ENCODE measurements at regions of chr3 and their contacts with region 1.

Region 1: DNA sequence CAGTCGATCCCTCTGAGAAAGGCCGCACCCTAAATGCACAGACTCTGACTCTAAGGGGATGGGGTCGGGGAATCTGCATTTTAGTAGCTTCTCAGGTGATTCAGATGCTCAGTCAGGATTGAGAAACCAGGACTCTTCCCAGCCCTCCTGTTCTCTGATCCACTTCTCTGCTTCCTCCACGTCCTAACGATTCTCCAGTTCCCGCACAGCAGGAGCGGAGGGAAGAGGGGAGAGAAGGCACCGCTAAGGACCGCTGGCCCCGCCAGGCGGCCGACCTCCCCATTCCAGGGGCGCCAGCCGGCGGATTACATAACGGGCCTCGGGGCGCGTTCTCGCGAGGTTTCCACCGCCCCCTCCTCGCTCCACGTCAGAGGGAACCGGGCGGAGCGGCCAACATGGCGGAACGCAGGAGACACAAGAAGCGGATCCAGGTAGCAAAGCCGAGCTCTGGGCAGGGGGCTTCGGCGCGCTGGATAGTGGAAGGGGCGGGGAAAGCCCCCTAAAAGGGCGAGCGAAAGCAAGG is at the start of gene SEC62:
- DNase-seq: peak; percentile 95 to 98 (median 96)
- ATAC-seq: peak; percentile 98 to 99 (median 98)
- H3K4me3 ChIP-seq: peak within 1 kb of the TSS; percentile 65 to 99 (median 84)
- H3K27ac ChIP-seq: peak within 1 kb of the TSS; percentile 90 to 99 (median 94)
- H3K4me1 ChIP-seq: peaks cover 2 to 47% (median 35%) of the 10 kb centered on the region in 12 donors
- H3K27me3 ChIP-seq: no peaks in the 10 kb centered on the region
- CTCF ChIP-seq: peak; percentile 24 to 76 (median 47)
- POLR2A ChIP-seq: peak in 1 of 2 donors; percentile 83
- total RNA-seq, gene SEC62: 29.5 to 104 (median 75.2) TPM

Region 2: DNA sequence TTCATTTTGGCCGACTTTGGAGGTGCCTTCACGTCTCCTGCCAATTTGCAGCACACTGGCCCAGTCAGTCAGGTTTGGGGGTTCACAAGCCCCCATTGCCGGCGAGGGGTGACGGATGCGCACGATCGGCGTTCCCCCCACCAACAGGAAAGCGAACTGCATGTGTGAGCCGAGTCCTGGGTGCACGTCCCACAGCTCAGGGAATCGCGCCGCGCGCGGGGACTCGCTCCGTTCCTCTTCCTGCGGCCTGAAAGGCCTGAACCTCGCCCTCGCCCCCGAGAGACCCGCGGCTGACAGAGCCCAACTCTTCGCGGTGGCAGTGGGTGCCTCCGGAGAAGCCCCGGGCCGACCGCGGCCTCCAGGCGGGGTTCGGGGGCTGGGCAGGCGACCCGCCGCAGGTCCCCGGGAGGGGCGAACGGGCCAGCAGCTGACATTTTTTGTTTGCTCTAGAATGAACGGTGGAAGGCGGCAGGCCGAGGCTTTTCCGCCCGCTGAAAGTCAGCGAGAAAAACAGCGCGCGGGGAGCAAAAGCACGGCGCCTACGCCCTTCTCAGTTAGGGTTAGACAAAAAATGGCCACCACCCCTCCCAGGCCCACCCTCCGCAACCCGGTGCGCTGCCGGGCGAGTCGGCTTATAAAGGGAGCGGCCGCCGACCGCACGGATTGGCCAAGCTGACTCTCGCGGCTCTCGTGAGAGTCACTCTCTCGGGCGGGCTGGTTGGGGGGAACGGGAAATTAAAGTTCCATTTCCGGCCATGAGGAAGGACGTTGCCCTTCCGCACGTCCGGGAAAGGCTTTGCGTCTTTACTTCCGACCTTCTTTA is 201.8 kb before region 1 on chr3 and contains the start of gene TERC:
- intact Hi-C with region 1: loop called in 4 of 10 experiments (anchors 5 to 10 kb)
- DNase-seq: peak; percentile 94 to 97 (median 95)
- ATAC-seq: peak; percentile 95 to 96 (median 96)
- H3K4me3 ChIP-seq: peak within 1 kb of the TSS; percentile 72 to 95 (median 84)
- H3K27ac ChIP-seq: peak within 1 kb of the TSS; percentile 95 to 100 (median 98)
- H3K4me1 ChIP-seq: peaks cover 0 to 12% (median 0%) of the 10 kb centered on the region in 12 donors
- H3K27me3 ChIP-seq: no peaks in the 10 kb centered on the region
- CTCF ChIP-seq: peak in 1 of 12 donors; percentile 5
- POLR2A ChIP-seq: peak; percentile 96 to 98
- total RNA-seq, gene TERC: 1.0 to 60.8 (median 3.1) TPM in 7 of 9 donors, not detected in the others

Region 3: GRCh38 chr3:169772897-169773828 is 193.3 kb before region 1 on chr3 and contains the start of gene MYNN:
- intact Hi-C with region 1: loop called in 6 of 10 experiments (anchors 5 to 10 kb)
- DNase-seq: peak; percentile 93 to 96 (median 94)
- ATAC-seq: peak; percentile 93 to 95 (median 94)
- H3K4me3 ChIP-seq: peak within 1 kb of the TSS; percentile 61 to 97 (median 81)
- H3K27ac ChIP-seq: peak within 1 kb of the TSS; percentile 96 to 100 (median 98)
- H3K4me1 ChIP-seq: peaks cover 0 to 28% (median 24%) of the 10 kb centered on the region in 12 donors
- H3K27me3 ChIP-seq: no peaks in the 10 kb centered on the region
- CTCF ChIP-seq: peak in 1 of 12 donors; percentile 29
- POLR2A ChIP-seq: peak; percentile 83 to 97
- total RNA-seq, gene MYNN: 8.8 to 14.1 (median 10.5) TPM

Region 4: DNA sequence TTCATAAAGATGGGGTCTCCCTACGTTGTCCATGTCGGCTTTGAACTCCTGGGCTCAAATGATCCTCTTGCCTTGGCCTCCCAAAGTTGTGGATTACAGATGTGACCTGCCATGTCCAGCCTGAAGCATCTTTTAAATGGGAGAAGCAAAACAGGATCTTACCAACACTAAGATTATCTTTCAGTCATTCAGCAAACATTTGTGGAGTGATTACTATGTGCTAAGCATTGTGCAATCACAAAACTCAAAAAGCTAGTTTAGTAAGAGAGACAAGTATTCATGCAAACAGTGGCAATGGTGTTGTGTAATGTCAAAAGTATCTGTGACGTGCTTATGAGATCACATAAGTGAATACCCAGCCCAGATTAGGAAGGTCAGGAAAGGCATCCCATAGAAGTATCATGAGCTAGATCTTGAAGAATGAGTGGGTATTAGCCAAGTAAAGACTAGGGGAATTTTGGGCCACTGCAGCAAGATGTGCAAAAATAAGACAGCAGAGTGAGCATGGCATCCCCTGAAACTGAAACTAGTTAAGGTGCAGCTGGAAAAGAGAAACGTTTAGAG is 32.2 kb after region 1 on chr3:
- intact Hi-C with region 1: loop called in 1 of 10 experiments (anchors 5 kb)
- DNase-seq: no peak
- ATAC-seq: peak in 1 of 4 donors; percentile 14
- H3K4me3 ChIP-seq: no peak overlapping the region
- H3K27ac ChIP-seq: no peak overlapping the region
- H3K4me1 ChIP-seq: peaks cover 0 to 29% (median 10%) of the 10 kb centered on the region in 12 donors
- H3K27me3 ChIP-seq: no peaks in the 10 kb centered on the region
- CTCF ChIP-seq: no peak
- POLR2A ChIP-seq: no peak

Region 5: DNA sequence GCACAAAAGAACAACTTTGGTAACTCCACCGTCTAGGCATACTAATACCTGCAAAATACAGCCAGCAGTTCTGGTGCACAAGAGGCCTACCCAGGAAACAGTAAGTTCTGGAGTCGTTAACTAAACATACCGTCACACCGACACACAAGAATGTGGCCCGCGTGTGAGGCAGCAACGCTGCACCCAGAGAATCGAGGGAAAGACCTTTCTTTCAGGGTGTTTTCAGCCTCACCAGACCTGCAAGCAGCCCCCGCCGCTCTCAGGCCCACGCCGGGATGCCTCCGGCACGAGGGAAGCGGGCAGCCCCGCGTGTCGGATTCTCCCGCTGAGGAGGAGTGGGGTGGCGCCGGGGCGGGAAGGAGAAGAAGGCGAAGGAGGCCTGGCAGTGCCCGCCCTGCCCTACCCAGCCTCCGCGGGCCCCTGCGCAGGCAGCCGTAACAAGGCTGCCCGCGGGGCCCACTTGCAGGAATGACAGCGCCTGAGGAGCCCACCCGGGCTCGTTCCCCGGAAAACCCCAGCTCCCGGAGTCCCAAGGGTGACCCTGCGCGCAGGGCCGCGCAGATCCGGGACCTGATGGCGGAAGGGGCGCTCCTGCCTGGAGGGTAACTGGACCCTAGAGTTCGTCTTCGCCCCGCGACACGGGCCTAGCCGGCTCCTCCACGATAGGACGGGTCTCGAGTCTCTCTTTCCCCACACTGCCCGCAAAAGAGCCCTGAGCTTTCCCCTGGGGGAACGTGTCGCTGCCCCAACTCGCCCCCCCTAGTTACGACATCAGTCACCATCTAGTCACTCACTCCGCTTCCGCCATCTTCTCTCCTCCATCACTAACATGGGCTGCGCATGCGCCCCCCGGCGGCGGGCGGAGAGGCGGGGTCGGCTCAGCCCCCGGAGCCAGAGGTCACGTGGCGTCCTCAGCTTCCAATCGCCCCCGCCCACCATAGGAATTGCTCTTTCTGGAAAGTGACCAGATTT is 214.7 kb after region 1 on chr3 and contains the start of gene PHC3:
- intact Hi-C with region 1: loop called in 1 of 10 experiments (anchors 2 kb)
- DNase-seq: peak; percentile 94 to 97 (median 95)
- ATAC-seq: peak; percentile 86 to 96 (median 95)
- H3K4me3 ChIP-seq: peak within 1 kb of the TSS; percentile 62 to 97 (median 90)
- H3K27ac ChIP-seq: peak within 1 kb of the TSS; percentile 82 to 99 (median 96)
- H3K4me1 ChIP-seq: peaks cover 0 to 26% (median 20%) of the 10 kb centered on the region in 12 donors
- H3K27me3 ChIP-seq: no peaks in the 10 kb centered on the region
- CTCF ChIP-seq: peak in 4 of 12 donors; percentile 14 to 48 (median 24)
- POLR2A ChIP-seq: peak in 1 of 2 donors; percentile 63
- total RNA-seq, gene PHC3: 29.9 to 83.8 (median 50.3) TPM

Region 6: GRCh38 chr3:170869645-170870593 is 903.4 kb after region 1 on chr3 and contains the start of gene RPL22L1:
- intact Hi-C with region 1: loop called in 1 of 10 experiments (anchors 5 kb)
- DNase-seq: peak; percentile 94 to 96 (median 96)
- ATAC-seq: peak; percentile 97 to 99 (median 98)
- H3K4me3 ChIP-seq: peak within 1 kb of the TSS; percentile 8 to 82 (median 66)
- H3K27ac ChIP-seq: peak within 1 kb of the TSS; percentile 54 to 92 (median 80)
- H3K4me1 ChIP-seq: peaks cover 0 to 33% (median 19%) of the 10 kb centered on the region in 12 donors
- H3K27me3 ChIP-seq: no peaks in the 10 kb centered on the region
- CTCF ChIP-seq: peak in 6 of 12 donors; percentile 15 to 42 (median 26)
- POLR2A ChIP-seq: peak in 1 of 2 donors; percentile 72
- total RNA-seq, gene RPL22L1: 8.6 to 34.2 (median 16.9) TPM